Testis (tissue), 5 donors: ENCODE measurements at regions of chr11 and their contacts with region 1.

Region 1: DNA sequence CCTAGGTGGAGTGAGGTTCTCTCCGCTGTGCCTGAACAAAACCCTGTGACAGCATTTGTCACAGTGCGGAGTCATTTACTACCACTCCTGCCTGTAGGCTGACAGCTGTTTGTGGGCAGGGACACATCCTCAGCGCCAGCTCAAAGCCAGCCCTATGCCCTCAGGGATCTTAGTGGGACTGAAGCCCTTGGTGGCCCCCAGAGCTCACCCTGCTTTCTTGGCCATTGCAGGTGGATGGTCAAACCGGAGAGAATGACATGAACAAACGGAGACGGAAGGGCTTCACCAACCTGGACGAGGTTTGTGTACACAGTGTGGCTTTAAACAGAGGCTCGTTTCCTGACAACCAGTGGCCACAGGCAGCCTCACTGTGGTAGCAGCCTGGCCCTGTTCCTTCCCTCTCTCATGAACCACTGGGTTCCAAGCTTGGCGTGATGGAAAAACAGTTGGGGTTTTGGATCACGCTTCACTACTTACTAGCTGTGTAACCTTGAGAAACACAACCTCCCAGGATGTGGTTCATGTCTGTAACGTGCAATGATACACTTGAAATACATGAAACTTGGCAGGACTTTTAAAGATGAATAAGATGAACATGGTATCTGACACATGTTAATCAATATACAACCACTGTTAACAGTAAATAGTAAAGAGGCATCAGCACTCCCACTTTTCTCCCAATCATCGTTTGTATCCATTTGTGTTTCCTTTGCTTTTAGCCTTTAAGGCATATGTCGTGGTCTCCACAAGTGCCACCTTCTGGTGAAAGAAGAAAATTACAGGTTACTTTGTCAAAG is 125.8 kb downstream of the MICAL2 start:
- DNase-seq: peak; percentile 55
- H3K4me3 ChIP-seq: no peak overlapping the region
- H3K27ac ChIP-seq: peak overlapping the region; percentile 89 to 93
- H3K4me1 ChIP-seq: peaks cover 63% of the 10 kb centered on the region
- H3K27me3 ChIP-seq: no peaks in the 10 kb centered on the region
- CTCF ChIP-seq: peak; percentile 57 to 78 (median 76)
- POLR2A ChIP-seq: no peak

Region 2: GRCh38 chr11:12052676-12053605 is 183.2 kb before region 1 on chr11:
- intact Hi-C with region 1: loop called (anchors 5 kb)
- DNase-seq: no peak
- H3K4me3 ChIP-seq: no peak overlapping the region
- H3K27ac ChIP-seq: no peak overlapping the region
- H3K4me1 ChIP-seq: peaks cover 13% of the 10 kb centered on the region
- H3K27me3 ChIP-seq: no peaks in the 10 kb centered on the region
- CTCF ChIP-seq: no peak
- POLR2A ChIP-seq: no peak

Region 3: GRCh38 chr11:12110201-12110713 is 125.9 kb before region 1 on chr11 and contains the start of gene MICAL2:
- intact Hi-C with region 1: loop called (anchors 10 kb)
- DNase-seq: peak; percentile 93
- H3K4me3 ChIP-seq: peak within 1 kb of the TSS; percentile 90 to 95
- H3K27ac ChIP-seq: peak within 1 kb of the TSS; percentile 95 to 97
- H3K4me1 ChIP-seq: peaks cover 29% of the 10 kb centered on the region
- H3K27me3 ChIP-seq: no peaks in the 10 kb centered on the region
- CTCF ChIP-seq: no peak
- POLR2A ChIP-seq: peak; percentile 87
- total RNA-seq, gene MICAL2: 401 to 461 TPM